ENCODE measurements at regions of chr14 and their contacts with region 1.

Region 1: DNA sequence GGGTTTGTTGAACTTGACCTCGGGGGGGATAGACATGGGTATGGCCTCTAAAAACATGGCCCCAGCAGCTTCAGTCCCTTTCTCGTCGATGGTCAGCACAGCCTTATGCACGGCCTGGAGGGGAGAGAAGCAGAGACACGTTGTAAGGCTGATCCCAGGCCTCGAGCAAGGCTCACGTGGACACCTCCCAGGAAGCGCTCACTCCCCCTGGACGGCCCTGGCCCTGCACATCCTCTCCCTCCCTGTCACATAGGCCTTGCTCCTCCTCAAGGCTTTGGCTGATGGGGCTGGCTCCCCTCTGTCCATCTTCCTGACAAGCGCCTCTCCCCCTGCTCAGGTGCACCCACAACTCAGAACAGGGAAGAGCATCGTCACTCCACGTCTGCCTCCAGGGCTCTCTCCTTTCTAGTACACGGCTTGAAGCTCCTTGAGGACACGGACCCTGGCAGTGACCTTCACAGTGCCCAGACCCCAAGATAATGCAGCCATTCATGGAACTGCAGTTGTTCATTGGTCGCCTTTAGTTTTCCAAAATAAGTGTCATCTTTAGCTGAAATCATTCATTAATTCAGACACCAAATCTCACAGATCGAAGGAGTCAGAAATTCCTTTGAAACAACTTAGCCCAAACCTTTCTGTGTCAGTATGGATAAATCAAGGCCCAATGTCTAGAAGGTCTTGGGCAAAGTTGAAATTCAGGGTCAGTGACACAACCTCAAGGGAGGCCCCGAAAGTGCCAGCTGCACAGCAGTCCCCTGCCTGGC is 9.7 kb downstream of the SERPINA1 start:
- DNase-seq: no peak
- ATAC-seq: no peak
- H3K4me3 ChIP-seq: no peak overlapping the region
- H3K4me3 Mint-ChIP-seq: no peak overlapping the region
- H3K27ac ChIP-seq: no peak overlapping the region
- H3K27ac Mint-ChIP-seq: no peak overlapping the region
- H3K4me1 ChIP-seq: no peaks in the 10 kb centered on the region
- H3K4me1 Mint-ChIP-seq: peaks cover 0 to 5% (median 0%) of the 10 kb centered on the region in 7 donors
- H3K27me3 ChIP-seq: no peaks in the 10 kb centered on the region
- H3K27me3 Mint-ChIP-seq: peaks cover 0 to 19% (median 6%) of the 10 kb centered on the region in 5 donors

Region 2: GRCh38 chr14:94363151-94363624 is 15.5 kb before region 1 on chr14:
- CTCF ChIA-PET with region 1: no interaction called
- POLR2A ChIA-PET with region 1: no interaction called
- intact Hi-C with region 1: loop called in 1 of 2 experiments (anchors 1 kb)
- DNase-seq: no peak
- ATAC-seq: no peak
- H3K4me3 ChIP-seq: no peak overlapping the region
- H3K4me3 Mint-ChIP-seq: no peak overlapping the region
- H3K27ac ChIP-seq: no peak overlapping the region
- H3K27ac Mint-ChIP-seq: no peak overlapping the region
- H3K4me1 ChIP-seq: no peaks in the 10 kb centered on the region
- H3K4me1 Mint-ChIP-seq: no peaks in the 10 kb centered on the region
- H3K27me3 ChIP-seq: no peaks in the 10 kb centered on the region
- H3K27me3 Mint-ChIP-seq: peaks cover 8 to 39% (median 20%) of the 10 kb centered on the region in 5 donors

Measured in naive thymus-derived CD4-positive, alpha-beta T cell (primary cell).